Posterior cingulate gyrus (tissue), 11 donors: ENCODE measurements at regions of chr3 and their contacts with region 1.

Region 1: GRCh38 chr3:56347219-56347871 is 120.9 kb downstream of the ERC2 start:
- DNase-seq: peak; percentile 30 to 95 (median 74)

Region 2: GRCh38 chr3:56443372-56443771 is 96.0 kb after region 1 on chr3:
- intact Hi-C with region 1: loop called (anchors 1 kb)
- DNase-seq: no peak

Region 3: DNA sequence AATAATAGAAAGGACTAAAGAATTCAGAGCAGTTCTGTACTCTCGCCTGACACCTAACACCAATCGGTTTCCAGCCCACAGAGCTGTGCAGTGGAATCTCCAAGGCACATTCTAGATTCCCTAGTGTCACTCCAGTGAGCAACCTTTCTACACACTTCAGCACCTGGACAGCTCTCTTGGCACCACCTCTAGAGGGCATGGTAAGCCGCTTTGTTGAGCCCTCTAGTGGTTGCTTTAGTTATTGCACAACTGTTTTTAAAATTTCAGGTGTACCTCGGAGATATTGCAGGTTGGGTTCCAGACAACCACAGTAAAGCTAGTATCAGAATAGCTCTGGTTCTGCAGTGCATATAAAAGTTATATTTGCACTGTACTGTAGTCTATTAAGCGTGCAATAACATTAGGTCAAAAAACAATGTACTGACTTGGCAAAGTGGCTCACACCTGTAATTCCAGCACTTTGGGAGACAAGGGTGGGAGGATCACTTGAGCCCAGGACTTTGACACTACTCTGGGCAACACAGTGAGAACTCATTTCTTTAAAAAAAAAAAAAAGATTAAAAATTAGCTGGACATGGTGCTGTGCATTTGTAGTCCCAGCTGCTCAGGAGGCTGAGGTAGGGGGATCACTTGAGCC is 147.5 kb after region 1 on chr3:
- intact Hi-C with region 1: loop called (anchors 2 kb)
- DNase-seq: peak in 6 of 10 donors; percentile 41 to 91 (median 48)